CD4-positive, alpha-beta memory T cell (primary cell): ENCODE measurements at regions of chr3 and their contacts with region 1.

Region 1: GRCh38 chr3:32334675-32335074 is 57.0 kb upstream of the CMTM7 start:
- DNase-seq: peak; percentile 54 to 63 (median 58)
- H3K4me3 ChIP-seq: no peak overlapping the region
- H3K4me3 Mint-ChIP-seq: peak overlapping the region in 7 of 8 donors; percentile 32 to 74 (median 55)
- H3K27ac ChIP-seq: peak overlapping the region; percentile 24
- H3K27ac Mint-ChIP-seq: peak overlapping the region; percentile 7 to 84 (median 75)
- H3K4me1 ChIP-seq: peaks cover 45% of the 10 kb centered on the region
- H3K4me1 Mint-ChIP-seq: peaks cover 39 to 60% (median 52%) of the 10 kb centered on the region in 4 donors
- H3K27me3 ChIP-seq: no peaks in the 10 kb centered on the region
- H3K27me3 Mint-ChIP-seq: no peaks in the 10 kb centered on the region

Region 2: GRCh38 chr3:32302601-32303398 is 31.9 kb before region 1 on chr3:
- CTCF ChIA-PET with region 1: interaction called, 382 read pairs
- POLR2A ChIA-PET with region 1: interaction called, 81 read pairs
- intact Hi-C with region 1: no loop called
- DNase-seq: no peak
- H3K4me3 ChIP-seq: peak overlapping the region in 1 of 2 donors; percentile 27
- H3K4me3 Mint-ChIP-seq: peak overlapping the region; percentile 37 to 82 (median 72)
- H3K27ac ChIP-seq: peak overlapping the region; percentile 60
- H3K27ac Mint-ChIP-seq: peak overlapping the region; percentile 83 to 97 (median 93)
- H3K4me1 ChIP-seq: peaks cover 75% of the 10 kb centered on the region
- H3K4me1 Mint-ChIP-seq: peaks cover 51 to 84% (median 71%) of the 10 kb centered on the region in 4 donors
- H3K27me3 ChIP-seq: no peaks in the 10 kb centered on the region
- H3K27me3 Mint-ChIP-seq: no peaks in the 10 kb centered on the region

Region 3: DNA sequence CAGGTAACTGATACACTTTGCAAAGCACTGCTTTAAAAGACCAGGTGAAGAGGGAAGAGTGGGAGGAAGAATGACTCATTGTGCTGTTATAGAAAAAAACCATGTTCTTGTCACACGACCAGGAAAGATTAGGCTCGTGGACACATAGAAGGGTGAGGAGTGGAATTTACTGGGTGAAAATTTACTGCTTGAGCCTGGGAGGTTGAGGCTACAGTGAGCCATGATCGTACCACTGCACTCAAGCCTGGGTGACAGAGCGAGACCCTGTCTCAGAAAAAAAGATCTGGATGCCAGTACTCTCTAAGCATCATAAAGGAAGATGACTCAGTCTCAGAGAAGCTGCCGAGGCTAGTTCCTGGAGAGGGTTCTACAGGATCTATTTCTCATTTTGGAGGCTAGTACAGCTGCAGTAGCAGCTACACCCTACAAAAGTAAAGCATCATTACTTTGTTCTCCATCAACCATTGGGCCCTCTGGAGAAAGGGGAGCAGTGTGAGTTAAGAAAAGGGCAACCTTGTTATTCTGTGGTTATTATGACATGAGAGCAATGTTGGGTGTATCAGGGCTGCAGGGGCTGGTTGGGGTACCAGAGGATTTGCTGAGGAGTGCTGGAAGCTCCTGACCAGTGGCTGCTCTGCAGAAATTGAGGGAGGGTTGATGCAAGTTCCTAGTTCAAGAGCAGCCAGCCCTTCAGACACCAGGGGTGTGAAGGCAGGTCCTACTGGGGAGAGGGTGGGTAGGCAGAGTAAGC is 20.8 kb before region 1 on chr3:
- CTCF ChIA-PET with region 1: interaction called, 29 read pairs
- POLR2A ChIA-PET with region 1: interaction called, 11 read pairs
- intact Hi-C with region 1: no loop called
- DNase-seq: peak in 1 of 5 donors; percentile 47
- H3K4me3 ChIP-seq: no peak overlapping the region
- H3K4me3 Mint-ChIP-seq: peak overlapping the region; percentile 15 to 81 (median 51)
- H3K27ac ChIP-seq: peak overlapping the region; percentile 19
- H3K27ac Mint-ChIP-seq: peak overlapping the region; percentile 75 to 94 (median 86)
- H3K4me1 ChIP-seq: peaks cover 23% of the 10 kb centered on the region
- H3K4me1 Mint-ChIP-seq: peaks cover 24 to 40% (median 31%) of the 10 kb centered on the region in 4 donors
- H3K27me3 ChIP-seq: no peaks in the 10 kb centered on the region
- H3K27me3 Mint-ChIP-seq: no peaks in the 10 kb centered on the region

Region 4: DNA sequence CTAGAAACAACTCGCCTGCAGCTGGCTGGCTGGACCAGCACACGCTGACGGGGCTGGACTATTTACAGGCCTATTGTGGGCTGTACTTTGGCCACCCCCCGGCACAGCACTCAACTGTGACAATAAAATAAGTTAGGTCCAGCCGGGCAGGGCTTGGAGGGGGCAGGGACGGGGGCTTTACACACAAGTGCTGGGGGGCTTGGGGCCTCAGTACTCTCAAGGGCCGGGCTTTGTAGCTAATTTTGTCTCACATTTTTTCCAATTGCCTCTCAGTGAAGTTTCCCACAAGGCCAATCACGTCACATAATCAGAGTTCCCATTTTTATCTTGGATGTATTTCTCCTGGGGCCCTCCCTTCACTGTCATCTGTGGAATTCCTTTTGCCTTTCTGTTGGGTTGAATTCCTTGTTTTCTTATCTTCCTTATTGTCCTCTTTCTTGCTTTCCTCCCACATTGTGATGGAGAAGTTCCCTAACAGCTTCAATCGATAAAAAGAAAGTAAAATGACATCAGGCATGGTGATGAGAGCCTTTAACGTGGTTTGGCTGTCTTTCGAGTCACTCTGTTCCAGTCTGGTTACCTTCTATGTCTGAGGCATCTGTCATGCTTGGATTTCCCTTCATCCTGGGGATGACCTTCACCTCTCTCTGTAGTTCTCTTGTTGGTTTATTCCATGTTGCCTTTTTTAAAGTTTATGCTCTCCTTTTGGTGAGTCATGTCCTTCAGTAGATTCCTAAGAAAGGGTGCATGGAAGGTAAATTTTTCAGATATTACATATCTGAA is 12.9 kb after region 1 on chr3:
- CTCF ChIA-PET with region 1: interaction called, 23 read pairs
- POLR2A ChIA-PET with region 1: no interaction called
- intact Hi-C with region 1: no loop called
- DNase-seq: no peak
- H3K4me3 ChIP-seq: no peak overlapping the region
- H3K4me3 Mint-ChIP-seq: peak overlapping the region in 1 of 8 donors; percentile 36
- H3K27ac ChIP-seq: no peak overlapping the region
- H3K27ac Mint-ChIP-seq: peak overlapping the region in 1 of 7 donors; percentile 43
- H3K4me1 ChIP-seq: no peaks in the 10 kb centered on the region
- H3K4me1 Mint-ChIP-seq: peaks cover 8 to 17% (median 12%) of the 10 kb centered on the region in 4 donors
- H3K27me3 ChIP-seq: no peaks in the 10 kb centered on the region
- H3K27me3 Mint-ChIP-seq: no peaks in the 10 kb centered on the region

Region 5: GRCh38 chr3:32374788-32375595 is 40.3 kb after region 1 on chr3:
- CTCF ChIA-PET with region 1: interaction called, 18 read pairs
- POLR2A ChIA-PET with region 1: interaction called, 4 read pairs
- intact Hi-C with region 1: no loop called
- DNase-seq: peak; percentile 74 to 78 (median 78)
- H3K4me3 ChIP-seq: no peak overlapping the region
- H3K4me3 Mint-ChIP-seq: peak overlapping the region in 1 of 8 donors; percentile 21
- H3K27ac ChIP-seq: no peak overlapping the region
- H3K27ac Mint-ChIP-seq: peak overlapping the region in 5 of 7 donors; percentile 18 to 70 (median 33)
- H3K4me1 ChIP-seq: peaks cover 21% of the 10 kb centered on the region
- H3K4me1 Mint-ChIP-seq: peaks cover 18 to 28% (median 24%) of the 10 kb centered on the region in 4 donors
- H3K27me3 ChIP-seq: no peaks in the 10 kb centered on the region
- H3K27me3 Mint-ChIP-seq: no peaks in the 10 kb centered on the region